ENCODE measurements at regions of chr9 and their contacts with region 1.

Region 1: GRCh38 chr9:2043881-2044462 is 28.8 kb downstream of the SMARCA2 start:
- DNase-seq: no peak
- ATAC-seq: peak; percentile 21
- H3K4me3 ChIP-seq: no peak overlapping the region
- H3K4me3 Mint-ChIP-seq: peak overlapping the region; percentile 2
- H3K27ac ChIP-seq: no peak overlapping the region
- H3K27ac Mint-ChIP-seq: peak overlapping the region; percentile 77
- H3K4me1 ChIP-seq: peaks cover 9% of the 10 kb centered on the region
- H3K4me1 Mint-ChIP-seq: peaks cover 64% of the 10 kb centered on the region
- H3K27me3 ChIP-seq: no peaks in the 10 kb centered on the region
- H3K27me3 Mint-ChIP-seq: no peaks in the 10 kb centered on the region
- CTCF ChIP-seq: no peak

Region 2: GRCh38 chr9:2053883-2054845 is 10.2 kb after region 1 on chr9:
- CTCF ChIA-PET with region 1: no interaction called
- POLR2A ChIA-PET with region 1: interaction called, 16 read pairs
- intact Hi-C with region 1: no loop called
- DNase-seq: peak; percentile 53 to 92 (median 59)
- ATAC-seq: peak; percentile 95
- H3K4me3 ChIP-seq: no peak overlapping the region
- H3K4me3 Mint-ChIP-seq: peak overlapping the region; percentile 71
- H3K27ac ChIP-seq: peak overlapping the region; percentile 55 to 73
- H3K27ac Mint-ChIP-seq: peak overlapping the region; percentile 97
- H3K4me1 ChIP-seq: peaks cover 20% of the 10 kb centered on the region
- H3K4me1 Mint-ChIP-seq: peaks cover 77% of the 10 kb centered on the region
- H3K27me3 ChIP-seq: no peaks in the 10 kb centered on the region
- H3K27me3 Mint-ChIP-seq: no peaks in the 10 kb centered on the region
- CTCF ChIP-seq: peak; percentile 14

Region 3: DNA sequence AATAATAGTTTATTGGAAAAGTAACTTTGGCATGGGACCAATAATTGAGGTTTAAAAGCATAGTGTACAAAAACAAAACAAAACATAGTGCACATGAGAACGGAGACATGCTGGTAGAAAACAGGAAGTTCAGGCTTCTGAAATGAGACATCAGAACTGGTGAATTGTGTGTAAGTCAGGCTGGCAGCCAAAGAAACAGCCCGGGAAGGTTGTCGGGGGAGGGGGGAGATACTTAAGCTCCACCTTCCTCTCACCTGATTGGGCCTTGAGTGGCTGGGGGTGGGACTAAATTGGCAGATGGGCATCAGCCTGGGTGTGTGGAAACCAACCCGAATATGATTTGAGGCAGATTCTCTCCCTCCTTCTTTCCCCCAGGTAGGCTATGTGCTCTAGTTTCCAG is 227.5 kb after region 1 on chr9:
- CTCF ChIA-PET with region 1: no interaction called
- POLR2A ChIA-PET with region 1: no interaction called
- intact Hi-C with region 1: no loop called
- DNase-seq: peak in 3 of 14 experiments; percentile 11 to 52 (median 38)
- ATAC-seq: no peak
- H3K4me3 ChIP-seq: no peak overlapping the region
- H3K4me3 Mint-ChIP-seq: no peak overlapping the region
- H3K27ac ChIP-seq: no peak overlapping the region
- H3K27ac Mint-ChIP-seq: no peak overlapping the region
- H3K4me1 ChIP-seq: no peaks in the 10 kb centered on the region
- H3K4me1 Mint-ChIP-seq: no peaks in the 10 kb centered on the region
- H3K27me3 ChIP-seq: peaks cover 0 to 2% of the 10 kb centered on the region in 2 experiments
- H3K27me3 Mint-ChIP-seq: peaks cover 12% of the 10 kb centered on the region
- CTCF ChIP-seq: no peak